HEK293 (cell line): ENCODE measurements at regions of chr1 and their contacts with region 1.

Region 1: DNA sequence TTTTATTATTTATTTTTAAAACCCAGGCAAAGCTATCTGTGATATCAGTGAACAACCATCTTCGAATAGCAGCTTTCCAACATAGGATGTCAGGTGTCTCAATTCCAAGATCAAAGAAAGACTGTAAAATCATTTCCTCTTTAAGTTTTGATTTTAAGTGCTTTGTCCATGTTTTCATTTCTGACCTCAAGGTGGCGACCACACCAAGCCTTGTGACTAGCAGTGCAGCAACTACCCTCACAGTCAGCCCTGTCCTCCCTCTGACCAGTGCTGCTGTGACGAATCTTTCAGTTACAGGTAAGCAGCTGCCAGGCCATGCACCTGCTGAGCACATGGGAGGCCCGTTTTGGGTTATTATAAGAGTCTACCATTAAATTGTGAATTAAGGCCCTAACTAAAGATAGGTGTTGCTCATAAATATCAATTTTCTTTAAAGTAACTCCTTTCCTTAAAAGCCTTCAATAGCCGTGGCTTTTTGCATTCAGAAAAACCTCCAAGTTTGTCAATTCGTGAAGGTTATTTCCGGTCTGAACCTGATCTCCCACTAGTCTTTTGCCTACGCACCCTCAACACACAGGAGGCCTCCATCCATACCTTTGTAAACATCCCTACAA is 117.0 kb downstream of the CD247 start:
- H3K4me3 ChIP-seq: no peak overlapping the region
- H3K27ac ChIP-seq: no peak overlapping the region
- H3K4me1 ChIP-seq: no peaks in the 10 kb centered on the region
- CTCF ChIP-seq: peak; percentile 60; the same call in 1 of the 2 replicates

Region 2: DNA sequence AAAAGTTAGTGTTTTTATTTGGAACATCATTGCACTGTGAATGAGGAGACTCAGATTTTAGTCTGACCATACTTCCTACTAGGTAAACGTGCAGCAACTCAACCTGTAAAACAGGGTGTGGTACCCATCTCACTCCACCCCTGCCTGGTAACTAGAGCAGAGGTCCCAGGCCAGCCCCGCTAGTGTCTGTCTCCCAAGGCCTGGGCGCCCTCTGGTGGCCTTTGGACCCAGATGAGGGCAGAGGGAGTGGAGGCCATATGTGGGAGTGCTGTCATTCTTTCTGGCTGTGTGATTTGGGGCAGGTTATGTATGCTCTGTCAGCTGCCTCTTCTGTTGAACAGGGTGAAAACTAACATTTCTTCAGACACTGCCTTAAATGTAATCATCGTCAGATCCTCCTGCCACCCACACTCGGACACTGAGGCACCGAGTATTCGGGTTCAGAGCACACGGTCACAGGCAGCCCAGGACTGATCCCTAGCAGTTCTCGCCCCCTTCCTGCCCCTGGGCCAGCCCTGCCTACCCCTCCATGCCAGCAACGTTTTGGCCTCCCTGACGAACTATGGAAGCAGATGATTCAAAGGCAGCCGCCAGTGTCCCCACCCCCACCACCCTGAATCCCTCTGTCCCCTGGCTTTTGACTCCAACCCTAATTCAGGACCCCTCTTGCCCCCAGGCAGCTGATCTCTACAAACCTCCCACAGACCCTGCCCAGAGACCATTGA is 40.9 kb after region 1 on chr1:
- CTCF ChIA-PET with region 1: interaction called, 23 read pairs
- POLR2A ChIA-PET with region 1: no interaction called
- H3K4me3 ChIP-seq: no peak overlapping the region
- H3K27ac ChIP-seq: no peak overlapping the region
- H3K4me1 ChIP-seq: no peaks in the 10 kb centered on the region
- CTCF ChIP-seq: peak; percentile 85

Region 3: DNA sequence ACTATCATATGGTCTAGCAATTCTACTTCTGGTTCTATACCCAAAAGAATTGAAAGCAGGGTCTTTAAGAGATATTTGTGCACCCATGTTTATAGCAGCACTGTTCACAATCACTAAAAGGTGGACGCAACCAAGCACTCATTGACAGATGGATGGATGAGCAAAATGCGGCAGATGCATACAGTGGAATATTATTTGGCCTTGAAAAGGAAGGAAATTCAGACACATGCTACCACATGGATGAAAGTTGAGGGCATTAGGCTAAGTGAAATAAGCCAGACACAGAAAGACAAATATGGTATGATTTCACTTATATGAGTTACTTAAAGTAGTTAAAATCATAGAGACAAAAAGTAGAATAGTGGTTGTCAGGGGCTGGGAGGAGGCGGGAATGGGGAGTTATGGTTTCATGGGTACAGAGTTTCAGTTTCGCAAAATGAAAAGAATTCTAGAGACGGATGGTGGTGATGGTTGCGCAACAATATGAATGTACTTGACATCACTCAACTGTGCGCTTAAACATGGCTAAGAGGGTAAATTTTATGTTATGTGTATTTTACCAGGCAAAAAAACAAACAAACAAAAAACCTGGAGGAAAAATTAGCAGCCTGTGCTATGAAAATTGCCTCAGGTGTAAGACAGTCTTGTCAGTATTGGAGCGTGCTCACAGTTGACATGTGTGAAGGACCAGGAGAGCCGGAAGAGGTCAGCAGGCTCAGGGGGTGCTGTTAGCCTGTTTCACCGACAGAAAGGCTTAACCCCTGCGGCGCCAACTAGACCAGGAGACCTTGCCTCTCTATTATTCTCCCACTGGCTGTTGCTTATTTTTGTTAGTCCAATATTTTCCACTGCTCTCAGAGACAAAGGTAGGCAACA is 90.5 kb after region 1 on chr1:
- CTCF ChIA-PET with region 1: no interaction called
- POLR2A ChIA-PET with region 1: no interaction called
- H3K4me3 ChIP-seq: no peak overlapping the region
- H3K27ac ChIP-seq: no peak overlapping the region
- H3K4me1 ChIP-seq: no peaks in the 10 kb centered on the region
- CTCF ChIP-seq: no peak

Region 4: GRCh38 chr1:167533851-167534300 is 132.5 kb after region 1 on chr1:
- CTCF ChIA-PET with region 1: interaction called, 11 read pairs
- POLR2A ChIA-PET with region 1: no interaction called
- H3K4me3 ChIP-seq: no peak overlapping the region
- H3K27ac ChIP-seq: no peak overlapping the region
- H3K4me1 ChIP-seq: no peaks in the 10 kb centered on the region
- CTCF ChIP-seq: peak; percentile 75